Activated CD8-positive, alpha-beta T cell treated with anti-CD3 and anti-CD28 coated beads for 36 hours (primary cell): ENCODE measurements at regions of chr15 and their contacts with region 1.

Region 1: GRCh38 chr15:56869573-56869972 is 48.9 kb upstream of the TCF12 start:
- DNase-seq: peak; percentile 72
- ATAC-seq: no peak
- H3K4me3 Mint-ChIP-seq: no peak overlapping the region
- H3K27ac Mint-ChIP-seq: no peak overlapping the region
- H3K4me1 Mint-ChIP-seq: no peaks in the 10 kb centered on the region
- H3K27me3 Mint-ChIP-seq: no peaks in the 10 kb centered on the region
- CTCF ChIP-seq: peak; percentile 62

Region 2: DNA sequence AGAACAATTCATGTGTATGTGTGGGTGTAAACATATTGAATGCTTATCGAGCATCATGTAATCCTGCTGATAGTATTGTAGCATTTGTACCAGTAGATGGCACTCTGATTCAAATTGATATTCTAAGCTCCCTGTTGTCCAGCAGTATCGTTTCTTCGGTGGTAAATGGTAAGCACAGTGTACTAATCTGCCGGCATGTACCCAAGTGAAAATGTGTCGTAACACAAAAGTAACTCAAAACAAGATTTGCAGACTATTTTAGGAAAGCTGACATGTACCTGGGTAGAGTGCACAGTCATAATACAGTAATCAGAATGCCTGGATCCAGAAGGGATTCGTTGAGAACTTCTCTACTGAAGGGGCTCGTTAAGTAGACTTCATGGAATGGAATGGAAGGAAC is 372.9 kb before region 1 on chr15:
- CTCF ChIA-PET with region 1: interaction called, 46 read pairs
- POLR2A ChIA-PET with region 1: no interaction called
- intact Hi-C with region 1: loop called (anchors 2 kb)
- DNase-seq: peak; percentile 5
- ATAC-seq: peak; percentile 58
- H3K4me3 Mint-ChIP-seq: no peak overlapping the region
- H3K27ac Mint-ChIP-seq: no peak overlapping the region
- H3K4me1 Mint-ChIP-seq: peaks cover 2% of the 10 kb centered on the region
- H3K27me3 Mint-ChIP-seq: peaks cover 2% of the 10 kb centered on the region
- CTCF ChIP-seq: peak; percentile 74

Region 3: GRCh38 chr15:56732921-56733797 is 136.4 kb before region 1 on chr15 and contains the start of gene ZNF280D:
- CTCF ChIA-PET with region 1: interaction called, 3 read pairs
- POLR2A ChIA-PET with region 1: no interaction called
- intact Hi-C with region 1: loop called (anchors 5 kb)
- DNase-seq: peak; percentile 80
- ATAC-seq: peak; percentile 86
- H3K4me3 Mint-ChIP-seq: peak within 1 kb of the TSS; percentile 94
- H3K27ac Mint-ChIP-seq: peak within 1 kb of the TSS; percentile 97
- H3K4me1 Mint-ChIP-seq: peaks cover 30% of the 10 kb centered on the region
- H3K27me3 Mint-ChIP-seq: no peaks in the 10 kb centered on the region
- CTCF ChIP-seq: no peak
- total RNA-seq, gene ZNF280D: 16.2 to 17.0 TPM